ENCODE measurements at regions of chr15 and their contacts with region 1.

Region 1: GRCh38 chr15:96327155-96327741 is 3.3 kb upstream of the NR2F2 start:
- DNase-seq: peak; percentile 90
- ATAC-seq: peak; percentile 7
- H3K4me3 ChIP-seq: peak overlapping the region; percentile 85
- H3K27ac ChIP-seq: peak overlapping the region; percentile 91
- H3K4me1 ChIP-seq: peaks cover 47% of the 10 kb centered on the region
- H3K27me3 ChIP-seq: no peaks in the 10 kb centered on the region
- CTCF ChIP-seq: peak; percentile 81

Region 2: GRCh38 chr15:95557226-95558046 is 769.8 kb before region 1 on chr15:
- CTCF ChIA-PET with region 1: no interaction called
- POLR2A ChIA-PET with region 1: no interaction called
- intact Hi-C with region 1: loop called (anchors 2 kb)
- DNase-seq: peak; percentile 92
- ATAC-seq: peak; percentile 71
- H3K4me3 ChIP-seq: peak overlapping the region; percentile 19; the same call in 1 of the 2 replicates
- H3K27ac ChIP-seq: peak overlapping the region; percentile 98
- H3K4me1 ChIP-seq: peaks cover 31% of the 10 kb centered on the region
- H3K27me3 ChIP-seq: no peaks in the 10 kb centered on the region
- CTCF ChIP-seq: no peak

Region 3: DNA sequence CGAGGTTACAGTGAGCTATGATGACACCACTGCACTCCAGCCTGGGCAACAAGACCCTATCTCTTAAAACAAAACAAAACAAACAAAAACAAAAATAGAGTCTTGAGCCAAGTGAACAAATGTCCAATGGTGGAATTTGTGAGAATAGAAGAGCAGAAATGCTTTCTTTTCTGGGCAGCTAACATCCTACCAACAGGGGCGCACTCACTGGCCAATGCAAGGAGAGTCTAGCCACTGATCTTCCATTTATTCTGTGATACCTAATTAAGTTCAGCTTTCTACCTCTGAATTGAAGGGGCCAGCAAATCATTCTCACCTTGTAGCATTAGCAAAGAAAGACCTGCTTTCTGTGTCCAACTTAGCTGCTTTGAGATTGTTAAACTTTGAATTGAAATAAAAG is 298.6 kb before region 1 on chr15:
- CTCF ChIA-PET with region 1: no interaction called
- POLR2A ChIA-PET with region 1: no interaction called
- intact Hi-C with region 1: loop called (anchors 2 kb)
- DNase-seq: no peak
- ATAC-seq: no peak
- H3K4me3 ChIP-seq: no peak overlapping the region
- H3K27ac ChIP-seq: no peak overlapping the region
- H3K4me1 ChIP-seq: peaks cover 11% of the 10 kb centered on the region
- H3K27me3 ChIP-seq: no peaks in the 10 kb centered on the region
- CTCF ChIP-seq: 0 out of 2 replicates have a peak, but pooled peaks have one; percentile 18

Region 4: GRCh38 chr15:96234109-96234892 is 92.9 kb before region 1 on chr15:
- CTCF ChIA-PET with region 1: interaction called, 4 read pairs
- POLR2A ChIA-PET with region 1: no interaction called
- intact Hi-C with region 1: loop called (anchors 1 kb)
- DNase-seq: peak; percentile 88
- ATAC-seq: peak; percentile 55
- H3K4me3 ChIP-seq: peak overlapping the region; percentile 49
- H3K27ac ChIP-seq: peak overlapping the region; percentile 96
- H3K4me1 ChIP-seq: peaks cover 47% of the 10 kb centered on the region
- H3K27me3 ChIP-seq: no peaks in the 10 kb centered on the region
- CTCF ChIP-seq: no peak

Region 5: GRCh38 chr15:96247621-96248305 is 79.5 kb before region 1 on chr15:
- CTCF ChIA-PET with region 1: no interaction called
- POLR2A ChIA-PET with region 1: no interaction called
- intact Hi-C with region 1: no loop called
- DNase-seq: no peak
- ATAC-seq: no peak
- H3K4me3 ChIP-seq: no peak overlapping the region
- H3K27ac ChIP-seq: no peak overlapping the region
- H3K4me1 ChIP-seq: no peaks in the 10 kb centered on the region
- H3K27me3 ChIP-seq: no peaks in the 10 kb centered on the region
- CTCF ChIP-seq: no peak

Region 6: GRCh38 chr15:96345560-96346399 is 18.5 kb after region 1 on chr15:
- CTCF ChIA-PET with region 1: interaction called, 6 read pairs
- POLR2A ChIA-PET with region 1: interaction called, 3 read pairs
- intact Hi-C with region 1: loop called (anchors 2 kb)
- DNase-seq: peak; percentile 38
- ATAC-seq: peak; percentile 52
- H3K4me3 ChIP-seq: no peak overlapping the region
- H3K27ac ChIP-seq: no peak overlapping the region
- H3K4me1 ChIP-seq: no peaks in the 10 kb centered on the region
- H3K27me3 ChIP-seq: no peaks in the 10 kb centered on the region
- CTCF ChIP-seq: peak; percentile 55

Region 7: DNA sequence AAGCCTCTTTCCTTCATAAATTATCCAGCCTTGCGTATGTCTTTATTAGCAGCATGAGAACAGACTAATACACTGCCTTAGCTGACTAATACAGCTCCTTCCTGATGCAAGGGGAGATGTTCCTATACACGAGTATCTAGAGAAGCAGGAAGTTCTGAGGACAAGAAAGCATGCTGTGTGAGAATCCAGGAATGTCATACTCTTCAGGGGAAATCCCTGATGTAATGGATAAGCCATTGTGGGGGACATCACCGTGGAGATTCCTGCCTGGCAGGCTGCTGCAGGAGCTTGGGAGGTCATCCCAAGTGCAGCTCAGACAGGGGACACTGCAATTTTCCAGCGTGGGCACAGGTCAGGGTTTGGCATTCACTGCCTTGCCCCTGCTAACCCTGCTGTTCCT is 480.1 kb after region 1 on chr15:
- CTCF ChIA-PET with region 1: no interaction called
- POLR2A ChIA-PET with region 1: no interaction called
- intact Hi-C with region 1: no loop called
- DNase-seq: no peak
- ATAC-seq: no peak
- H3K4me3 ChIP-seq: no peak overlapping the region
- H3K27ac ChIP-seq: no peak overlapping the region
- H3K4me1 ChIP-seq: no peaks in the 10 kb centered on the region
- H3K27me3 ChIP-seq: peaks cover 51% of the 10 kb centered on the region
- CTCF ChIP-seq: no peak